H1 (cell line): ENCODE measurements at regions of chr18 and their contacts with region 1.

Region 1: DNA sequence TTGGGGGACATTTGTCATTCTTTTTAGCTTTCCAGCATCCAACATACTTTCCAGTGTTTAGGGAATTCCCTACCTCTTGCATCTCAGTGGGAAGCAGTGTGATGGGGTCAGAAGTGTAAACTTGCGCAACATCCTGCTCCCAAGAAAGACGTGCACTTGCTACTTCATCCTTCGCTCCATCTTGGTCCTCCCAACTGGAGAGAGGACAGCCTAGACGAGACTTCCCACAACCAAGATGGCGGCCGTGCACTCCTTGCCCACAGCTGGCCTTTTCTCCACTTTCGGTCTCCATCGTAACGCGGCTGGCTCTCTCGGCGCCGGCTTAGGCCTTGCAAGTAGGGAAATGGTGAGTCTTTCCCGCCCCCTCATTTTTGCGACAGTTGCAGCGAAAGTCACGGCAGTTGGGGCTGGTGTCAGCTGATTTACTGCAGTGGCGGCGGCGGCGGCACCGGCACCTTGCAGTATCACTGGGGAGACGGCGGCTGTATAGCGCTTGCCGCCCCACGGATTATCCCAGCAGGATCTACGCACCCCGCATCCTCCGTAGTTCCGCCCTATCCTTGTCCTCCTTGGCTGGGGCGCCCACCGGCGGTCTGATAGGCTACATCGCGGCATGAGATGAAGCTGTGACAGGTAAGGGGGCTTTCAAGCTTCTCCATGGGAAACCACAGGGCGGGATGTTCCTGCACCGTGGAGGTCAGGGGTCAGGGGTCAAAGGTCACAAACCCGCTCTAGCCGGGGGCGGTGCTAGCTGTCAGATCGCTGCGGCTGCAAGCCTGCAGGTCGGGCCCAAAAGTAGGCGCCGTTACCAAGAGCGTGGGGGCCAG is at the start of gene WDR7:
- DNase-seq: peak; percentile 88 to 93
- H3K4me3 ChIP-seq: peak within 1 kb of the TSS; percentile 78 to 93 (median 82)
- H3K27ac ChIP-seq: peak within 1 kb of the TSS; percentile 43; the same call in 1 of the 2 replicates
- H3K4me1 ChIP-seq: peaks cover 0 to 2% (median 0%) of the 10 kb centered on the region in 4 experiments; a peak in 1 of 7 replicates
- H3K27me3 ChIP-seq: no peaks in the 10 kb centered on the region
- CTCF ChIP-seq: no peak
- EP300 ChIP-seq: no peak
- POLR2A ChIP-seq: peak in 1 of 2 experiments; percentile 65; a peak in 2 of 3 replicates
- RAD21 ChIP-seq: no peak
- total RNA-seq, gene WDR7: 15.2 and 16.5 TPM in 2 replicates

Region 2: DNA sequence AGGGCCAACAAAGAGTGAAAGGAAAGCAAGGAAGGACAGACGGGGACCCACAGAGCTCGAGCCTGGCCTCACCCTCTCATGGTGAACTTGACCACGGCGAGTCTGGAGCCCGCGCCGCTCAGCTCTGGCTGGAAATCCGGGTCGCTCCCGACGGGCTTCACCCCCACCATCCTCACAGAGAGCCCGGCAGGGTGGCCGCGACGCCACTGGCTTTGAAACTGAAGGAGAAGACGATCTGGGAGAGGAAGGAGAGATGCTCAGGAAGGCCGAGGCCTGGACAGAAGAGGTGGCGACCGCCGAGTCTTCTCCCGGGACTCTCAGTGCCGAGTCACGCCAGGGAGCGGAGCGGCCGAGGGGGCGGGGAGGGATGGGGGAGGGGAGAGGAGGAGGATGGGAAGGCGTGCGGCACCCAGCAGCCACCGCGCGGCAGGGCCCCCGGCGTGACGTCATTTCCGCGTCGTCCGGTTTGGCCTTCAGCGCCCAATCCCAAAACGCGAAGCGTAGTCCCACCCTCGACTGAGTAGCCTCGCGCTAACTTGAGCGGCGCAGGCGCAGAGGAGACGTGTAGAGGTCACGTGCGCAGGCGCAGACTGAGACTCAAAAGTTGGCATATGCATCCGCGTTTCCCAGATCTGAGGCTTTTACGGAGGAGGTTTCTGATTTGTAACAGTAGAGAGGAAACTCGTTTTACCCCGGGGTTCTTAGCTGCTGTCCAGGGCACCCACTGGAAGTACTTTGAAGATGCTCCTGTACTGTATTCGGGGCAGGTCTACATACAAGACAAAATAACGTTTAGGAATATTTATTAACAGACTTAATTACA is 12.7 kb before region 1 on chr18 and contains the start of gene TXNL1:
- CTCF ChIA-PET with region 1: interaction called, 18 read pairs
- POLR2A ChIA-PET with region 1: interaction called, 23 read pairs
- DNase-seq: peak; percentile 92 to 98
- H3K4me3 ChIP-seq: peak within 1 kb of the TSS; percentile 87 to 97 (median 92)
- H3K27ac ChIP-seq: peak within 1 kb of the TSS; percentile 88
- H3K4me1 ChIP-seq: no peaks in the 10 kb centered on the region; a peak in 1 of 7 replicates
- H3K27me3 ChIP-seq: 0 out of 7 replicates have a peak, but pooled peaks cover 0 to 2% (median 0%) of the 10 kb centered on the region in 4 experiments
- CTCF ChIP-seq: no peak
- EP300 ChIP-seq: 0 out of 3 replicates have a peak, but pooled peaks of 1 of the 2 experiments have one; percentile 14
- POLR2A ChIP-seq: peak; percentile 94 to 96
- RAD21 ChIP-seq: no peak
- total RNA-seq, gene TXNL1: 85.8 and 87.4 TPM in 2 replicates